ENCODE measurements at regions of chr7 and their contacts with region 1.

Region 1: DNA sequence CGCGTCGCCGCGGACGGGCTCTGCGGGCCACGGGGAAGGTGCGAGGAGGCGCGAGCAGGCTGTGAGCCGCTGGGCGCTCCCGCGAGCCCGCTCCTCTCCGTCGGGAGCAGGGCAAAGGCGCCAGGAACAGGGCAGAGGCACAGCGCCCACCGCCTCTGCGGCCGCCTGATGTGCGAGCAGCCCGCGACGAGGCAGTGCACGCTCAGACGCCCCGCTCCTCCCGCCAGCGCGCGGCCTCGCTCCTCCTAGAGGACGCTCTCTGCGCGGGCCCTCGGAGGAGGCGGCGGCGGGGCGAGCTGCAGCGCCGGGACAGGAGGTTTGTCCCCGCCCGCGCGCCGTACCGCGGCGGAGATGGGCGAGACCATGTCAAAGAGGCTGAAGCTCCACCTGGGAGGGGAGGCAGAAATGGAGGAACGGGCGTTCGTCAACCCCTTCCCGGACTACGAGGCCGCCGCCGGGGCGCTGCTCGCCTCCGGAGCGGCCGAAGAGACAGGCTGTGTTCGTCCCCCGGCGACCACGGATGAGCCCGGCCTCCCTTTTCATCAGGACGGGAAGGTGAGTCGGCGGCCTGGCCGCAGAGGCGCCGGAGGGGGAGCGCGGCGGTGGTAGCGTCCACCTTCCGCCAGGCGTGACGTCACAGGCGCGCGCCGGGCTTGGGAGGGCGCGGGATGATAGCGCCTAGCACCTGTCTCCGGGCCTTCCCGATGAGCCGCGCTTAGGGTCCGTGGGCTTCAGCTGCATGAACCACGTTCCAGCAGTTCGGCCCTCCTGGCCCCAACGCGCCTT is 731 bp downstream of the LANCL2 start:
- DNase-seq: peak; percentile 100
- ATAC-seq: peak; percentile 88
- H3K4me3 ChIP-seq: peak overlapping the region; percentile 80 to 99 (median 92)
- H3K4me3 Mint-ChIP-seq: peak overlapping the region; percentile 96
- H3K27ac ChIP-seq: peak overlapping the region; percentile 96 to 98
- H3K27ac Mint-ChIP-seq: peak overlapping the region; percentile 100
- H3K4me1 ChIP-seq: peaks cover 13 to 22% of the 10 kb centered on the region in 2 donors
- H3K4me1 Mint-ChIP-seq: peaks cover 22% of the 10 kb centered on the region
- H3K27me3 ChIP-seq: no peaks in the 10 kb centered on the region
- H3K27me3 Mint-ChIP-seq: peaks cover 3% of the 10 kb centered on the region
- CTCF ChIP-seq: peak; percentile 41

Region 2: GRCh38 chr7:54758702-54759592 is 606.9 kb before region 1 on chr7 and contains the start of gene SEC61G:
- CTCF ChIA-PET with region 1: interaction called, 4 read pairs
- POLR2A ChIA-PET with region 1: interaction called, 6 read pairs
- intact Hi-C with region 1: loop called (anchors 1 kb)
- DNase-seq: peak; percentile 96
- ATAC-seq: peak; percentile 97
- H3K4me3 ChIP-seq: peak within 1 kb of the TSS; percentile 63 to 94 (median 89)
- H3K4me3 Mint-ChIP-seq: peak within 1 kb of the TSS; percentile 100
- H3K27ac ChIP-seq: peak within 1 kb of the TSS; percentile 78 to 80
- H3K27ac Mint-ChIP-seq: peak within 1 kb of the TSS; percentile 96
- H3K4me1 ChIP-seq: peaks cover 10 to 21% of the 10 kb centered on the region in 2 donors
- H3K4me1 Mint-ChIP-seq: peaks cover 27% of the 10 kb centered on the region
- H3K27me3 ChIP-seq: no peaks in the 10 kb centered on the region
- H3K27me3 Mint-ChIP-seq: peaks cover 2% of the 10 kb centered on the region
- CTCF ChIP-seq: no peak
- total RNA-seq, gene SEC61G: 23.6 and 26.8 TPM in 2 replicates

Region 3: DNA sequence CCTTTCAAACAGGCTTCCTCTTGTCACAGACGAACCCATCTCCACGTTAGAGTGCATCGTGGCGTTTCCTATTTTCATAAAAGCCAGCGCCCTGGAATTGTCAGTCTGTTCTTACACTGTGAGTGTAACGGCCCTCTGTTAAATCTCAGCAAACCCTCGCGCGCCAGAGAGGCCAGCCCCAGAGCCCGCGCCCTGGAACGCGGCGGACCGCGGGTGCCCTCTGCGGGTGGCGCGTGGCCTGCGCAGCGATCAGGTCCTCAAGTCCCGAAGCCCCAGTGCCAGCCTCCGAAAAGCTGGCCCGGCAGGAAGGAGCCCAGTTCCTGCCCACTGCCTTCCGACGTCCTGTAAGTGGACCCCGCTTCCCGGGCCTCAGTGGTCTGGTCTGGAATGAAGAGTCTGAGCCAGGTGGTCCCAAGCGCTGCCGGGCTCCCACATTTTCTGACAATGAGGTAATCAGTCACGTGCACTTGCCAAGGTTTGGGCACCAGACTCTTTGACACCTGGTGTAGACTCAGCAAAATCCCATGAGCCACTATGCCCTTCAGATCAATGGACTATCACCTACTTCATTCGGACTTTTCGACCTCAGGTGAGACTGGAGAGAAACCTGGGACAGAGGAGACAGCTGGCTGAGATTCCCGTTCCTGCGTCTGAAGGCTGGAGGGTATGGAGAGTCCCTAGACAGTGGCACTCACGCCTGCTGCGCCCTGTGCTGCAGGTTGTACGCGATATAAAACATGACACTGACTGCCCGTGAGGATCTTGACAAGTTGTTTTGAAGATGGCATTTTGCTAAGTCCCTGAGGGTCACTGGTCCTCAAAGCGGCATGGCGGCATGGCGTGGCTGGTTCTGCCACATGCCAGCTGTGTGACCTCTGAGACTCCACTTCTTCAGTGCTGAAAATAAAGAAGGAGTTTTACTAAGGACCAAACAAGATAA is 110.1 kb before region 1 on chr7:
- CTCF ChIA-PET with region 1: no interaction called
- POLR2A ChIA-PET with region 1: no interaction called
- intact Hi-C with region 1: loop called (anchors 1 kb)
- DNase-seq: peak; percentile 73
- ATAC-seq: peak; percentile 93
- H3K4me3 ChIP-seq: peak overlapping the region; percentile 8 to 55 (median 48)
- H3K4me3 Mint-ChIP-seq: peak overlapping the region; percentile 88
- H3K27ac ChIP-seq: no peak overlapping the region
- H3K27ac Mint-ChIP-seq: no peak overlapping the region
- H3K4me1 ChIP-seq: peaks cover 16% of the 10 kb centered on the region in 2 donors
- H3K4me1 Mint-ChIP-seq: peaks cover 11% of the 10 kb centered on the region
- H3K27me3 ChIP-seq: peaks cover 0 to 29% (median 16%) of the 10 kb centered on the region in 4 experiments
- H3K27me3 Mint-ChIP-seq: peaks cover 52% of the 10 kb centered on the region
- CTCF ChIP-seq: peak; percentile 70

Region 4: GRCh38 chr7:55415173-55415778 is 49.4 kb after region 1 on chr7:
- CTCF ChIA-PET with region 1: no interaction called
- POLR2A ChIA-PET with region 1: no interaction called
- intact Hi-C with region 1: loop called (anchors 2 kb)
- DNase-seq: peak; percentile 81
- ATAC-seq: peak; percentile 96
- H3K4me3 ChIP-seq: no peak overlapping the region
- H3K4me3 Mint-ChIP-seq: no peak overlapping the region
- H3K27ac ChIP-seq: no peak overlapping the region
- H3K27ac Mint-ChIP-seq: no peak overlapping the region
- H3K4me1 ChIP-seq: no peaks in the 10 kb centered on the region
- H3K4me1 Mint-ChIP-seq: peaks cover 2% of the 10 kb centered on the region
- H3K27me3 ChIP-seq: no peaks in the 10 kb centered on the region
- H3K27me3 Mint-ChIP-seq: no peaks in the 10 kb centered on the region
- CTCF ChIP-seq: peak; percentile 88

Region 5: DNA sequence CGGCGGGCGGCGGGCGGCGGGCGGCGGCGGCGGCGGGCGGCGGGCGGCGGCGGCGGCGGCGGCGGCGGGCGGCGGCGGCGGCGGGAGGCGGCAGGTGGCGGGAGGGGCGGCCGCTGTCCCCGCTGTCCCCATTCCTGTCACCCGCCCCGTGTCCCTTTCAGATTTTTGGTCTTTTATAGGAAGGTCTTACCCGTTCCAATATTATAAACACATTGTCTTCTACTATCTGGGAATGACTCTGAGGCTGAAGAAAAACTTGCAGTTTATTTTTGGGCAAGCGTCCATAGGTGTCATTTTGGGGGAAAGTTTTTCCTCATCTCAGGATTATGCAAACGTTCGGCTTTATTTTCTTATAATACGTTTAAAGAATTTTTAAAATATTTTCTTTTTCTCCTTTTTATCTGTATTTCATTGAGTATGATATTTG is 522.0 kb after region 1 on chr7:
- CTCF ChIA-PET with region 1: no interaction called
- POLR2A ChIA-PET with region 1: no interaction called
- intact Hi-C with region 1: loop called (anchors 1 kb)
- DNase-seq: peak; percentile 34
- ATAC-seq: no peak
- H3K4me3 ChIP-seq: peak overlapping the region; percentile 36 to 70 (median 59)
- H3K4me3 Mint-ChIP-seq: peak overlapping the region; percentile 90
- H3K27ac ChIP-seq: no peak overlapping the region
- H3K27ac Mint-ChIP-seq: peak overlapping the region; percentile 86
- H3K4me1 ChIP-seq: peaks cover 0 to 11% of the 10 kb centered on the region in 2 donors
- H3K4me1 Mint-ChIP-seq: peaks cover 8% of the 10 kb centered on the region
- H3K27me3 ChIP-seq: no peaks in the 10 kb centered on the region
- H3K27me3 Mint-ChIP-seq: peaks cover 4% of the 10 kb centered on the region
- CTCF ChIP-seq: no peak